ENCODE measurements at regions of chr9 and their contacts with region 1.

Region 1: DNA sequence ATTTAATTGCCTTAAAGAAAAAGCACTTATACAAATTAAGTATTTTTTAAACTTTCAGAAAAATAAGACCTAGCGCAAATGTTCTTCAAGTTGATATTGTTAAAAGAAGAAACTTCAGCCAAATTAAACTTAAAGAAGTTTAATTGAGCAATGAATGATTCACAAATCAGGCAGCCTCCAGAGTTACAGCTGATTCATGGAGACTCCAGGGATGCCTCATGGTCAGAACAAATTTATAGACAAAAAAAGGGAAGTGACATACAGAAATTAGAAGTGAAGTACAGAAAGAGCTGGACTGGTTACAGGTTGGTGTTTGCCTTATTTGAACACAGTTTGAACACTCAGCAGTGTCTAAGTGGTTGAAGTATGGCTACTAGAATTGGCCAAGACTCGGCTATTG is 60.3 kb downstream of the CDKN2A start:
- DNase-seq: peak; percentile 57
- ATAC-seq: peak; percentile 67; the same call in 1 of the 2 replicates
- H3K4me3 ChIP-seq: no peak overlapping the region
- H3K27ac ChIP-seq: no peak overlapping the region
- H3K4me1 ChIP-seq: no peaks in the 10 kb centered on the region
- H3K27me3 ChIP-seq: no peaks in the 10 kb centered on the region
- CTCF ChIP-seq: no peak
- POLR2A ChIP-seq: no peak
- RAD21 ChIP-seq: no peak

Region 2: GRCh38 chr9:21883642-21884041 is 50.2 kb before region 1 on chr9:
- CTCF ChIA-PET with region 1: no interaction called
- POLR2A ChIA-PET with region 1: no interaction called
- dilution Hi-C with region 1: no loop called
- in situ Hi-C with region 1: no loop called
- intact Hi-C with region 1: loop called (anchors 5 kb)
- DNase-seq: no peak
- ATAC-seq: no peak; the same call in 1 of the 2 replicates
- H3K4me3 ChIP-seq: no peak overlapping the region
- H3K27ac ChIP-seq: no peak overlapping the region
- H3K4me1 ChIP-seq: no peaks in the 10 kb centered on the region
- H3K27me3 ChIP-seq: no peaks in the 10 kb centered on the region
- CTCF ChIP-seq: no peak
- POLR2A ChIP-seq: no peak
- RAD21 ChIP-seq: no peak

Region 3: DNA sequence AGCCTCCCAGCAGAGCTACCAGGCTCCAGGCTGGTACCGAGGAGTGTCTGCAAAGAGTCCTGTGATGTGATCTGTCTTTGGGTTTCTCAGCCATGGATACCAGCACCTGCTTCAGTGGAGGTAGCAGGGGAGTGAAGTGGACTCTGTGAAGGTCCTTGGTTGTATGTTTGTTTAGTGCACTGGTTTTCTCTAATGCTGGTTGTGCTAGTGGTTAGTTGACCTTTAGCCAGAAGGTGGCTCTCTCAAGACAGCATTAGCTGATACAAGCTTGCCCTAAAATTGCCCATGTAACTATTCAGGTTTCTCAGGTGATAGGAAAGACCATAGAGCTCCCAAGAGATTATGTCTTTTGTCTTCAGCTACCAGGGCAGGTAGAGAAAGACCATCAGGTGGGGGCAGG is 44.2 kb before region 1 on chr9:
- CTCF ChIA-PET with region 1: no interaction called
- POLR2A ChIA-PET with region 1: no interaction called
- dilution Hi-C with region 1: no loop called
- in situ Hi-C with region 1: no loop called
- intact Hi-C with region 1: loop called (anchors 1 kb)
- DNase-seq: no peak
- ATAC-seq: no peak
- H3K4me3 ChIP-seq: no peak overlapping the region
- H3K27ac ChIP-seq: no peak overlapping the region
- H3K4me1 ChIP-seq: no peaks in the 10 kb centered on the region
- H3K27me3 ChIP-seq: no peaks in the 10 kb centered on the region
- CTCF ChIP-seq: no peak
- POLR2A ChIP-seq: no peak
- RAD21 ChIP-seq: no peak

Region 4: DNA sequence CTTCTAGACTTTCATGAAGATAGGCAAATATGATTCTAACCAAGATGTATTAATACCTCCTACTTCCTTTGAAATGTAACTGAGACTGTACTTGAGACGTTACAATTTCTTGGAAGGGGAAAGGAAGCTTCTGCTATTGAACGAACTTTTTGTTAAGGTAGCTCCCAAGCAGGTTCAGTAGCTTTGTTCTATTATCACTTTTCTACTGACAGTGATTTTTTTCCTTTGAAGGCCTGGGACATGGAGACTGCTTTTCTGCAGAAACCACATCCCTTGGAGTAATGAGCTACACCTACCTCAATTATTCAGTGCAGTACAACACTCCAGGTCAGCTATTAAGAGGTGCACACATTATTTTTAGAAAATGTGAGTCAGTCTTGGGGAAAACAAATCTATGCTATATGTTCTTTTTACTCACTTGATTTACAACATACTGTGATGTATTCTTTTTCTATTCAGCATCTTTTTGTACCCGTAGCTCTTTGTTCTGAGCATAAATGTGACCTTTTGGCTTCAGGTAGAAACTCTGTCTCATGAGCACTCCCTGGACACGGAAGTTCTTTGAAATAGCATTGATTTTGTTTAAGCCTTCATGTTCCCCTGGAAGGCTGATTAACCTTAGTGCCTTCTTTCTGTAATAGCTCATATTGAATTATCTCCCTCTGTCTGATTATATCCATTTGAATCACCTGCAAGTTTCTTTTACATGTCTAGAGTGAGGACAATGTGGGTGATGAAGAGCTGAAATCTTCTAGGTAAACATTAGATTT is 131.8 kb after region 1 on chr9:
- CTCF ChIA-PET with region 1: no interaction called
- POLR2A ChIA-PET with region 1: no interaction called
- dilution Hi-C with region 1: no loop called
- in situ Hi-C with region 1: no loop called
- intact Hi-C with region 1: no loop called
- DNase-seq: no peak
- ATAC-seq: no peak
- H3K4me3 ChIP-seq: no peak overlapping the region
- H3K27ac ChIP-seq: no peak overlapping the region
- H3K4me1 ChIP-seq: no peaks in the 10 kb centered on the region
- H3K27me3 ChIP-seq: no peaks in the 10 kb centered on the region
- CTCF ChIP-seq: no peak
- POLR2A ChIP-seq: no peak
- RAD21 ChIP-seq: no peak

Measured in IMR-90 (cell line).